ENCODE measurements at regions of chr3 and their contacts with region 1.

Region 1: DNA sequence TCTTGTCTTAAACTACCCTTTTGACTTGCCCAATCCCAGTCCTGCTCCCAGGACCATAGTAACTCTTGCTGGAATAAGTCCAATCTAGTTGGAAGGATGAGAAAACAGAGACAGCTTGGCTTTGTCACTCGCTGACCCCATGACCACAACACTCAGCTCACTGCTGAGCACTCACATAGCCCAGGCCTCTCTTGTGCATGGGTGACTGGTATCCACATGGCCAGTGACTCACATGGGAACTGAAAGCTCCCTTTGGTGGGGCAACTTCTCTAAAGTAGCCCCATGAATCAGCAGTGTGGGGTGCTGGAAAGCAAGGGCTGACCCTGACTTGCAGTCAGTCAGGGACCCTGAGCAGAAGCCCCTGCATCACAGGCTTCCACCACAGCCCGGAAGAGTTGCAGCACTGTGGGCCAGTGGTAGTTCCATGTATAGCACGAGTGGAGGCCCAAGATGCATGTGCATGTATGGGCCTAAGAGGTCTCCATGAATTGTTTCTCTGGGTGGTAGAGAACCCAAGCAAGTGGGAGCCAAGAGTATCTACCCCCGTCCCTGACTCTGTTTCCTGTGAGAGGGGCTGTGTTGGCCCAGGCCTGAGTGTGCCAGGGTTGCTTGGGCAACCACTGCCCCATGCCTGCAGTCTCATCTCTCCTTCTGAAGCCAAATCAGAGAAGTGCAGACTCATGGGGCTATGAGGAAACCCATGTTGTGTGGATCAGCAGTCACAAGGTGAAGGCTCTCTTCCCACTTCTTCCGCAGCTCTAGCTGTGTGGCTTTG is 62.1 kb upstream of the XCR1 start:
- DNase-seq: peak in 6 of 10 donors; percentile 17 to 86 (median 33)

Region 2: DNA sequence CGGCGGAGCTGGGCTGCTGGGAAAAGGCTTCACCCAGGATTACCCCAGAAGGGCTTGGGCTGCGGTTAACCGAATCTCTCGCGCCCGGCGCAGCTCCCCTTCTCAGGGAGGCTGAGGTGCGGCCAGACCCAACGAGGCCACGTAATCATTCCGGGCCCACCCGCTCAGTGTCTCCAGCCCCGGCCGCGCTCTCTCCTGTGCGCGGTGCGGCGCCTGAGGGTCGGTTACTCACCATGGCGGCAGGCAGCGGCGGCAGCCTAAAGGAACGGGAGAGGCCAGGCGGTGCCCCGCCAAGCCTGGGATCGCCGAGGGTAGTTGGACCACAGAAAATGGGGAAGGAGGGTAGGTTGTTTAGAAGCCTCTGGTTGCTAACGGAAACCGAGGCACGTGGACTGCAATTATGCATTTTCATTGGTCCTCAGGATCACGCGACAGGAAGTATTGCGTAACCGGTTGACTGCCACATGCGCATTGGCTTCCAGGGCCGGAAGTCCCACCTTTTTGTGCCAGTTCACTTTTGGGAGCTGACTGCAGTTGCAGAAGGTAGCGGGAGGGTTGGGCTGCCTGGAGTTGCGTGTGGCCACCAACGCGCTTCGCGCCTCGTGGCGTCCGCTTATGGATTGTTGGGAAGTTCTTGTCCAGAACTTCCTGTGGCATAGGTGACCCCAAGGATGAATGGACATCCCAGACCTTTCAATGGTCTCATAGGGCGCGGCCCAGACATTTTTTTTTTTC is 247.5 kb before region 1 on chr3 and contains the start of gene LZTFL1:
- intact Hi-C with region 1: no loop called
- DNase-seq: peak; percentile 85 to 98 (median 91)

Region 3: DNA sequence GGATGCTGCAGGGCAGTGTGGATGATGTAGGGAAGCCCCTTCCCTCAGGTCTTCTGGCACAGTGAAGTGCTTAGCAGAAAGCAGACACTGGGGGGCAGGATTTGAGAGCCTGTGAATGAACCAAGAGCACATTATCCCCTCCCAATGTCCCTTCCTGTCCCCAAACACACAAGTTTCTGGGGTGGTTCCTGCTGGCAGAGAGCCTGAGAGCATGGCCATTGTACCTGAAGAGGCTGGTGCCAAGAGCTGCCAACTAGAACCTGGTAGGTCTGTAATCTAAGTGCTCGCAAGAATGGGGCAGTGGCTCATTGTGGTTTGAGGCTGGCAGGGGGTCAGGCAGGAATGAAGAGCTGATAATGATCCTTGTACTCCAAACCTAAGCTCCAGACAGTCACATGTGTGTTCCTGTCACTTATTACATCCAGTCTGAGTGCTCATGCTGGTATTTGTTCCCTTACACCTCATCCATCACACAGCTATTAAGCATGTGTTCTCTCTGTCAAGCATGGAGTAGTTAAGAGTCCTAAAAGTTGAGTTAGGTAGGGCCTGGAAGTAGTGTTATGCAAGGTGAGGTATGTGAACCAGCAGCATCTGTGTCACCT is 125.4 kb after region 1 on chr3:
- intact Hi-C with region 1: loop called (anchors 10 kb)
- DNase-seq: no peak

Region 4: DNA sequence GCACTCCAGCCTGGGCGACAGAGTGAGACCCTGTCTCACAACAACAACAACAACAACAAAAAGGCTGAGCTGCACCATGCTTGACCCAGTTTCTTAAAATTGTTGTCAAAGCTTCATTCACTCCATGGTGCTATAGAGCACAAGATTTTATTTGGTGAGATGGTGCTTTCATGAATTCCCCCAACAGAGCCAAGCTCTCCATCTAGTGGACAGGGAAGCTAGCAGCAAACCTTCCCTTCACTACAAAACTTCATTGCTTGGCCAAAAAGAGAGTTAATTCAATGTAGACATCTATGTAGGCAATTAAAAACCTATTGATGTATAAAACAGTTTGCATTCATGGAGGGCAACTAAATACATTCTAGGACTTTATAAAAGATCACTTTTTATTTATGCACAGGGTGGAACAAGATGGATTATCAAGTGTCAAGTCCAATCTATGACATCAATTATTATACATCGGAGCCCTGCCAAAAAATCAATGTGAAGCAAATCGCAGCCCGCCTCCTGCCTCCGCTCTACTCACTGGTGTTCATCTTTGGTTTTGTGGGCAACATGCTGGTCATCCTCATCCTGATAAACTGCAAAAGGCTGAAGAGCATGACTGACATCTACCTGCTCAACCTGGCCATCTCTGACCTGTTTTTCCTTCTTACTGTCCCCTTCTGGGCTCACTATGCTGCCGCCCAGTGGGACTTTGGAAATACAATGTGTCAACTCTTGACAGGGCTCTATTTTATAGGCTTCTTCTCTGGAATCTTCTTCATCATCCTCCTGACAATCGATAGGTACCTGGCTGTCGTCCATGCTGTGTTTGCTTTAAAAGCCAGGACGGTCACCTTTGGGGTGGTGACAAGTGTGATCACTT is 283.3 kb after region 1 on chr3:
- intact Hi-C with region 1: loop called (anchors 5 kb)
- DNase-seq: no peak

Region 5: GRCh38 chr3:46442576-46443562 is 353.4 kb after region 1 on chr3:
- intact Hi-C with region 1: loop called (anchors 10 kb)
- DNase-seq: no peak